IMR-90 (cell line): ENCODE measurements at regions of chr3 and their contacts with region 1.

Region 1: GRCh38 chr3:148309390-148310035 is 388.2 kb upstream of the AGTR1 start:
- DNase-seq: peak; percentile 51
- ATAC-seq: peak; percentile 91
- H3K4me3 ChIP-seq: no peak overlapping the region
- H3K27ac ChIP-seq: no peak overlapping the region
- H3K4me1 ChIP-seq: no peaks in the 10 kb centered on the region
- H3K27me3 ChIP-seq: no peaks in the 10 kb centered on the region
- CTCF ChIP-seq: peak; percentile 79
- POLR2A ChIP-seq: no peak
- RAD21 ChIP-seq: peak; percentile 72

Region 2: DNA sequence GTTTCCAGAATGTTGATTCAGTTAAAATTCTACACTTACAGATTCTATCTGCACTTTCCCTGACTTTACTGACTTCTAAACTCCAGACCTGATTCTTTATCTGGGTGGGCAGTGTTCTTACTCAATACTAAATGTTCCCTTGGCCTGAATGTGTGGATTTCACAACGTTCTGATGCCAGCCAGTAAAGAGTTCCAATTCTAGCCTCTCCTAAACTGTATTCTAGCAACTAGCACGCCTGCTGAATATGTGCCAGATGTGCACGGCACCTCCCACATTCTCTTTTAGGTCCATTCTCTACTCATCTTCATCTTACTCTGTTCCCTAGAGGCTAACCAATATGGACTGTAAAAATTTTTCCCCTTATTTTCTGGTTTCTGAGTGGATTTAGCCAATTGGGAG is 91.3 kb before region 1 on chr3:
- CTCF ChIA-PET with region 1: no interaction called
- POLR2A ChIA-PET with region 1: no interaction called
- dilution Hi-C with region 1: no loop called
- in situ Hi-C with region 1: no loop called
- intact Hi-C with region 1: no loop called
- DNase-seq: no peak
- ATAC-seq: no peak
- H3K4me3 ChIP-seq: no peak overlapping the region
- H3K27ac ChIP-seq: no peak overlapping the region
- H3K4me1 ChIP-seq: no peaks in the 10 kb centered on the region
- H3K27me3 ChIP-seq: no peaks in the 10 kb centered on the region
- CTCF ChIP-seq: no peak
- POLR2A ChIP-seq: no peak
- RAD21 ChIP-seq: no peak

Region 3: GRCh38 chr3:148246291-148246923 is 63.1 kb before region 1 on chr3:
- CTCF ChIA-PET with region 1: no interaction called
- POLR2A ChIA-PET with region 1: no interaction called
- dilution Hi-C with region 1: no loop called
- in situ Hi-C with region 1: no loop called
- intact Hi-C with region 1: loop called (anchors 10 kb)
- DNase-seq: no peak
- ATAC-seq: no peak
- H3K4me3 ChIP-seq: no peak overlapping the region
- H3K27ac ChIP-seq: no peak overlapping the region
- H3K4me1 ChIP-seq: no peaks in the 10 kb centered on the region
- H3K27me3 ChIP-seq: no peaks in the 10 kb centered on the region
- CTCF ChIP-seq: no peak
- POLR2A ChIP-seq: no peak
- RAD21 ChIP-seq: no peak

Region 4: GRCh38 chr3:148433665-148434064 is 124.2 kb after region 1 on chr3:
- CTCF ChIA-PET with region 1: no interaction called
- POLR2A ChIA-PET with region 1: no interaction called
- dilution Hi-C with region 1: no loop called
- in situ Hi-C with region 1: no loop called
- intact Hi-C with region 1: no loop called
- DNase-seq: no peak
- ATAC-seq: no peak
- H3K4me3 ChIP-seq: no peak overlapping the region
- H3K27ac ChIP-seq: no peak overlapping the region
- H3K4me1 ChIP-seq: no peaks in the 10 kb centered on the region
- H3K27me3 ChIP-seq: no peaks in the 10 kb centered on the region
- CTCF ChIP-seq: no peak
- POLR2A ChIP-seq: no peak
- RAD21 ChIP-seq: no peak

Region 5: GRCh38 chr3:148459931-148460513 is 150.5 kb after region 1 on chr3:
- CTCF ChIA-PET with region 1: no interaction called
- POLR2A ChIA-PET with region 1: no interaction called
- dilution Hi-C with region 1: no loop called
- in situ Hi-C with region 1: no loop called
- intact Hi-C with region 1: loop called (anchors 1 kb)
- DNase-seq: peak; percentile 23
- ATAC-seq: no peak
- H3K4me3 ChIP-seq: no peak overlapping the region
- H3K27ac ChIP-seq: no peak overlapping the region
- H3K4me1 ChIP-seq: no peaks in the 10 kb centered on the region
- H3K27me3 ChIP-seq: no peaks in the 10 kb centered on the region
- CTCF ChIP-seq: peak; percentile 46
- POLR2A ChIP-seq: no peak
- RAD21 ChIP-seq: peak; percentile 61

Region 6: DNA sequence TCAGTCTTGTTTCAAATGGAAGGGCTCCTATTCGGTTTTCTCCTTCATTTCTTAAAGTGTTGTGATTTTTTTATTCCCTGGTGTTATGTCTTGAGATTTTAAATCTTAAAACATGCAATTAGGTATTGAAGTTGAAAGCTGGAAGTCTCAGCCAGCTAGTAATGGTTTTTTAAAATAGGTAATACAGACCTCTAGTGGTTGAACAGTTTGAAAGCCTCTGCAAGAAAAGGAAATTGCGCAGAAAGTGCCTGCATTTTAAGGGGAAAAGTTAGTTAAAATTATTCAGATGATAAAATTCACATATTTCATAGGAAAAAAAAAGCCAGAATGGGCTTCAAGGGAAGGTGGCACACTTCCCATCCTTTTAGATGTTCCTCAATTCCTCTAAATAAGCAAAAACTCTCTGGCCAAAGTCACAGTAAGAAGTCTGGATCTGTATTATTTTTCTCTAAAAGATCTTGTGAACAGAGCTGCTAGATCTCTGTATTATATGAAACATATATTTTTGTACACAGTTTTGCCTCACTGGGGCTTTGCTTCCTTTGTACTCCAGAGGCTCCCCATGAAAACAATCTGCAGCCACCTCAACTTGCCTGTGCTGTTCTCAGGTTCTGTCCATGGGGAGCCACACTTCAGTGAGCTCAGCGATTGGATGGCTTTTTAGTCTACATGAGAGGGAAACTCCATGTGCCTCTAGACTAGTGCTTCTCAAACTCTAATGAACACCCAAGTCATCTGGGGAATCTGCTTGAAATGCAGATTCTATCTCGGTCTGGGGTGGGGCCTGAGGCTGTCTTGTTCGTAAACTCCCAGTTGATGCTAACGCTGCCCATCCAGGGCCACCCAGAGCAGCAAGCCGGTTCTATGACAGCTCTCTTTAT is 409.7 kb after region 1 on chr3:
- CTCF ChIA-PET with region 1: no interaction called
- POLR2A ChIA-PET with region 1: no interaction called
- dilution Hi-C with region 1: no loop called
- in situ Hi-C with region 1: loop called (anchors 10 kb)
- intact Hi-C with region 1: loop called (anchors 5 kb)
- DNase-seq: peak; percentile 32
- ATAC-seq: 0 out of 2 replicates have a peak, but pooled peaks have one; percentile 46
- H3K4me3 ChIP-seq: no peak overlapping the region
- H3K27ac ChIP-seq: no peak overlapping the region
- H3K4me1 ChIP-seq: no peaks in the 10 kb centered on the region
- H3K27me3 ChIP-seq: no peaks in the 10 kb centered on the region
- CTCF ChIP-seq: peak; percentile 54
- POLR2A ChIP-seq: no peak
- RAD21 ChIP-seq: peak; percentile 43

Region 7: GRCh38 chr3:148943506-148944205 is 634.1 kb after region 1 on chr3:
- CTCF ChIA-PET with region 1: no interaction called
- POLR2A ChIA-PET with region 1: no interaction called
- dilution Hi-C with region 1: no loop called
- in situ Hi-C with region 1: loop called (anchors 10 kb)
- intact Hi-C with region 1: loop called (anchors 1 kb)
- DNase-seq: peak; percentile 85
- ATAC-seq: peak; percentile 89
- H3K4me3 ChIP-seq: no peak overlapping the region
- H3K27ac ChIP-seq: no peak overlapping the region
- H3K4me1 ChIP-seq: peaks cover 3% of the 10 kb centered on the region; the same call in 1 of the 2 replicates
- H3K27me3 ChIP-seq: peaks cover 2% of the 10 kb centered on the region
- CTCF ChIP-seq: peak; percentile 78
- POLR2A ChIP-seq: no peak
- RAD21 ChIP-seq: peak; percentile 70